GM10248 (cell line): ENCODE measurements at regions of chr5 and their contacts with region 1.

Region 1: DNA sequence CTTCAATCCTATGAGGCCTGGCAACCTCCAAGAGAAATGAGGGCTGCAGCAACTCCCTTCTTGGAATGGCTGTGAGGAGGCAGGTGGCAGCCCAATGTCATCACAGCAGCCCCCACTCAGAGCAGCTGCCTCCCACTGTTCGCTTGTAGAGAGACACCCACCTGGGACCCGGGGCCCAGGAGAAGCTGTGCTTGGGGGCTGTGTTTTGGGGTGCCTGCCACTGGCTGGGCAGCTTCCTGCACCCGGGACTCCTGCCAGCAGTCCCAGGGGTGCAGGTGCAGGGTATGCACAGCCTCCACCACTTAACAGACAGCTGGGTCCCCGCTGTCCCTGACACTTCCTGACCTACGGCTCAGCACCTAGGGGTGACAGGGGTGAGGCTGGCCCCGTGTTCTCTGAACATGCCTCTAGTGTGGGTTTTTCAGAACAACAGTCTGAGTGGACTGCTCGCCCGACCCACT is 26.2 kb downstream of the NIPAL4 start:
- DNase-seq: peak; percentile 34
- CTCF ChIP-seq: no peak

Region 2: DNA sequence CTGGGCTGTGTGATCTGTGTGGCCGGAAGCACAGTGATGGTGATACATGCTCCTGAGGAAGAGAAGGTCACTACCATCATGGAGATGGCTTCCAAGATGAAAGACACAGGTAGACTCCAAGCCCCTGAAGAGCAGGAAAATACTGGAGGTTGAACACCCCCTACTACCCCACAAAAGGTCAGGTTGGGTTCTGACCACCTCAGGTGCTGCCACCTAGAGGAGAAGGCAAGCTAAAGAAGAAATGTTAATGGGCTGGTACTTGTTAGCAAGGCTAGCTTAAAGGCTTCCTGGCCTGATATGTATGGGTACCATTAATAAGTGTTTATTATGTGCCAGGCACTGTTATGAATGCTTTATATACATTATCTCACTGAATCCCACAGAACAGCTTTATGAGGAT is 14.5 kb before region 1 on chr5:
- CTCF ChIA-PET with region 1: interaction called, 55 read pairs
- POLR2A ChIA-PET with region 1: no interaction called
- DNase-seq: peak; percentile 54
- CTCF ChIP-seq: peak; percentile 67

Region 3: DNA sequence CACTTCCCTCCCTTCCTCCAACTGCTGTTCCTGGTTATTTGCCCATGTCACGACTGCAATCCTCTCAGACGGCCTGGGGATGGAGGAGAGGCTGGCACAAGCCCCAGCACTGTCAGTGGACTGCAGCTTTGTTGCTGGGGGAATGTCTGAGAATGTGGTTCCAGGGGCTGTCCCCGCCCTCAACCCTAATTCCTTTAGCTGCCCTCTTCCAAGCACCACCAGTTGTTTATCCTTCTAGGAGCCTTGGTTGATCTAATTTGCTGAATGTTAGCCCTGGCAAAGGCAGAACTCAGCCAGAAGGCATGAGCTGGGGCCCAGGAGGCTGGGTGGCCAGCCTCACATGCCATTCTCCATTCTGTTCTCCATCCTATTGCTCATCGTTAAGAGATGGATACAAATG is 37.7 kb after region 1 on chr5:
- CTCF ChIA-PET with region 1: no interaction called
- POLR2A ChIA-PET with region 1: no interaction called
- DNase-seq: no peak
- CTCF ChIP-seq: no peak

Region 4: DNA sequence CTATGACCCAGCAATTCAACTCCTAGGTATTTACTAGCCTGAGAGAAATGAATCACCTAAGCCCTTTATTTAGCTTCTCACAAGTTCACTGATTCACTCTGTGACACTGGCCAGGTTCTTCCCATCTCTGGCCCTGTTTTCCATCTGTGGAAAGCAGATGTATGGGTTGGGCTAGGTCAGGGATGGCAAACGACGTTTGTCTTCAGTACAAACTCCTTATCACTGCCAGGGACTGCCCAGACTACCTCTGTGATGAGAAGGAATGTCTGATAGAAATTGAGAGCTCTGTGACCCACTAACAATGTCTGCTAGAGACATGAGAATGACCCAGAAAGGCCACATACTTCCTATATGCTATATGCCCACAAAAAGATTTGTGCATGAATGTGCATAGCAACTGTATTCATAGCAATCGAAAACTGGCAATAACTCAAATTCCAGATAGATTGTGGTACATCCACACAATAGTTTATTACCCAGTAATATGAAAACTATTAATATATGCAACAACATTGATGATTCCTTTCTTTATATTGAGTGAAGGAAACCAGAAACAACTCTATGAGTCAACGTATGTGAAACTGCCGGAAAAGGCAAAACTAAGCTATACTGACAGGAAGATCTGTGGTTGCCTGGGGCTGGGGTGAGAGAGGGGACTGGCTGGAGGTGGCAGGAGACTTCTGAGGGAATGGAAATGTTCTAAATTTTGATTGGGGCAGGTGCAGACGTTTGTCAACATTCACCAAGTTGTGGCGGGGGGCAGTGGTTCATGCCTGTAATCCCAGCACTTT is 121.3 kb after region 1 on chr5:
- CTCF ChIA-PET with region 1: no interaction called
- POLR2A ChIA-PET with region 1: no interaction called
- DNase-seq: no peak
- CTCF ChIP-seq: no peak

Region 5: GRCh38 chr5:157761690-157762621 is 275.7 kb after region 1 on chr5:
- CTCF ChIA-PET with region 1: no interaction called
- POLR2A ChIA-PET with region 1: no interaction called
- DNase-seq: peak; percentile 66
- CTCF ChIP-seq: peak; percentile 75